CD8-positive, alpha-beta memory T cell (primary cell): ENCODE measurements at regions of chr1 and their contacts with region 1.

Region 1: DNA sequence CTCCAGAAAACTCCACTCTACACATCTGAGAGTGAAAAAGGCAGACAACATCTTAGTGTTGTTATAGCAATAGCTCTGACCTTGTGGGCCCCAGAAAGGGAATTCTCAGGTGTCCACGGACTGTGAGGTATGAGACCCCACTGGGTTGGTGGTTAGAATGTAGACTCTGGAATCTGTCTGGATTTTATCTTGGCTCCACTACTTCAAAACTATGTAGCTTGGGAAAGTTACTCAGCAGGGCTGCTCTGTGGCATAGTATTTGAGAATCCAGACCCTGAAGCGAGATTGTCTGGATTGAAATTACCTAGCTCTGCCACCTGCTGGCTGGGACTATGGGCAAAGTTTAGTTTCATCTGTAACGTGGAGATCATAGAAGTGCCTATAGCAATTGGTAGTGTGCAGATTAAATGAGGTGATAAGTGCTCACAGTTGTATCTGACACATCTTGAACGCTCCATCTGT is 25.8 kb downstream of the PRDM2 start:
- DNase-seq: peak; percentile 25 to 71 (median 50)
- H3K4me3 ChIP-seq: no peak overlapping the region
- H3K4me3 Mint-ChIP-seq: peak overlapping the region in 1 of 7 donors; percentile 6
- H3K27ac ChIP-seq: no peak overlapping the region
- H3K27ac Mint-ChIP-seq: peak overlapping the region; percentile 12 to 92 (median 73)
- H3K4me1 ChIP-seq: peaks cover 28% of the 10 kb centered on the region
- H3K4me1 Mint-ChIP-seq: peaks cover 49 to 77% (median 63%) of the 10 kb centered on the region in 3 donors
- H3K27me3 ChIP-seq: no peaks in the 10 kb centered on the region
- H3K27me3 Mint-ChIP-seq: no peaks in the 10 kb centered on the region

Region 2: DNA sequence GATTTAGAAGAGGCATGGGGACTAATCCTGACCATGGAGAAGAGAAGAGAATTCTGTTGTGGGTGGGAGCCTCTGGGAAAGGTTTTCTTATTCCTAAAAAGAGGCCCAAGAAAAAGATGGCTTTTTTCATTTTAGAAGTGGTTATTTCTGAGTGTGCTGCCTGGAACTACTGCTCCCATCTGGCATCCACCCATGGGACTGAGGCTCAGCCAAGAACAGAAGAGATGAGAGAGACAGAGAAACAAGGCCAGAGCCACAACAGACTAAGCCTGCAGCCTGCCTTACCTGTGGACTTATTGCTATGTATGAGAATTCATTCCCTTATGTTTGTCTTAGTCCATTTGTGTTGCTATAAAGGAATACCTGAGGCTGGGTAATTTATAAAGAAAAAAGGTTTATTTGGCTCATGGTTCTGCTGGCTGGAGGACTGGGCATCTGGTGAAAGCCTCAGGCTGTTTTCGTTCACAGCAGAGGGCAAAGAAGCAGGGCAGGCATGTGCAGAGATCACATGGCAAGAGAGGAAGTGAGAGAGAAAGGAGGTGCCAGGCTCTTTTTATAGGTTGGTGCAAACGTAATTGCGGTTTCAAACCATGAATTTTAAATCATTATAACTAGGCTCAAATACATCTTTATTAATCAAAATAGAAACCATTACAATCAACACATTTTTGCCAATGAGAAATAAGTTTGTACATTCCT is 83.3 kb before region 1 on chr1:
- CTCF ChIA-PET with region 1: no interaction called
- POLR2A ChIA-PET with region 1: no interaction called
- DNase-seq: no peak
- H3K4me3 ChIP-seq: no peak overlapping the region
- H3K4me3 Mint-ChIP-seq: no peak overlapping the region
- H3K27ac ChIP-seq: no peak overlapping the region
- H3K27ac Mint-ChIP-seq: no peak overlapping the region
- H3K4me1 ChIP-seq: no peaks in the 10 kb centered on the region
- H3K4me1 Mint-ChIP-seq: no peaks in the 10 kb centered on the region
- H3K27me3 ChIP-seq: no peaks in the 10 kb centered on the region
- H3K27me3 Mint-ChIP-seq: peaks cover 8 to 10% of the 10 kb centered on the region in 2 donors

Region 3: GRCh38 chr1:13664451-13664850 is 61.3 kb before region 1 on chr1:
- CTCF ChIA-PET with region 1: interaction called, 24 read pairs
- POLR2A ChIA-PET with region 1: no interaction called
- DNase-seq: no peak
- H3K4me3 ChIP-seq: no peak overlapping the region
- H3K4me3 Mint-ChIP-seq: no peak overlapping the region
- H3K27ac ChIP-seq: no peak overlapping the region
- H3K27ac Mint-ChIP-seq: no peak overlapping the region
- H3K4me1 ChIP-seq: peaks cover 7% of the 10 kb centered on the region
- H3K4me1 Mint-ChIP-seq: peaks cover 6 to 7% (median 6%) of the 10 kb centered on the region in 3 donors
- H3K27me3 ChIP-seq: no peaks in the 10 kb centered on the region
- H3K27me3 Mint-ChIP-seq: peaks cover 9 to 19% of the 10 kb centered on the region in 2 donors

Region 4: GRCh38 chr1:13714851-13715250 is 10.9 kb before region 1 on chr1:
- CTCF ChIA-PET with region 1: interaction called, 11 read pairs
- POLR2A ChIA-PET with region 1: interaction called, 4 read pairs
- DNase-seq: no peak
- H3K4me3 ChIP-seq: no peak overlapping the region
- H3K4me3 Mint-ChIP-seq: no peak overlapping the region
- H3K27ac ChIP-seq: no peak overlapping the region
- H3K27ac Mint-ChIP-seq: peak overlapping the region in 1 of 8 donors; percentile 46
- H3K4me1 ChIP-seq: no peaks in the 10 kb centered on the region
- H3K4me1 Mint-ChIP-seq: peaks cover 38 to 71% (median 59%) of the 10 kb centered on the region in 3 donors
- H3K27me3 ChIP-seq: no peaks in the 10 kb centered on the region
- H3K27me3 Mint-ChIP-seq: peaks cover 0 to 3% of the 10 kb centered on the region in 2 donors

Region 5: GRCh38 chr1:13764588-13765332 is 39.0 kb after region 1 on chr1:
- CTCF ChIA-PET with region 1: no interaction called
- POLR2A ChIA-PET with region 1: no interaction called
- DNase-seq: peak in 2 of 5 donors; percentile 15 to 50
- H3K4me3 ChIP-seq: no peak overlapping the region
- H3K4me3 Mint-ChIP-seq: peak overlapping the region in 4 of 7 donors; percentile 1 to 57 (median 24)
- H3K27ac ChIP-seq: no peak overlapping the region
- H3K27ac Mint-ChIP-seq: peak overlapping the region; percentile 11 to 85 (median 48)
- H3K4me1 ChIP-seq: peaks cover 63% of the 10 kb centered on the region
- H3K4me1 Mint-ChIP-seq: peaks cover 84 to 91% (median 87%) of the 10 kb centered on the region in 3 donors
- H3K27me3 ChIP-seq: no peaks in the 10 kb centered on the region
- H3K27me3 Mint-ChIP-seq: no peaks in the 10 kb centered on the region

Region 6: DNA sequence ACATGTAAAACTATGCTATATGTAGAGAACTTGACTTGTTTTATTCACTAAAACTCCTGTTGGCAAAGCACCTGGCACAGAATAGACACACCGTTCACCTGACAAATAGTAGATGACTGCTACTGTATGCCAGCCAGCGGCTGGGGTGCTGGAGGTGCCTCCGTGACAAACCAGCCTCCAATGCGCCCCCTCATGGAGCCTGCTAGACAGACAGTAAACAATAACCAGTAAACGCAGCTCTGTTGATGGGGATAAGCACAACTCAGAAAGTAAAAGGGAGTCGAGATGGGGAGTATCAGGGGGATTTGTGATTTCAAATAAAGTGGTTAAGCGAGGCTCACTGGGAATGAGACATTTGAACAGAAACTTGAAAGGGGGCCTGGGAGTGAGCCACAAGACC is 81.5 kb after region 1 on chr1:
- CTCF ChIA-PET with region 1: no interaction called
- POLR2A ChIA-PET with region 1: no interaction called
- DNase-seq: no peak
- H3K4me3 ChIP-seq: no peak overlapping the region
- H3K4me3 Mint-ChIP-seq: no peak overlapping the region
- H3K27ac ChIP-seq: no peak overlapping the region
- H3K27ac Mint-ChIP-seq: peak overlapping the region in 4 of 8 donors; percentile 24 to 79 (median 58)
- H3K4me1 ChIP-seq: no peaks in the 10 kb centered on the region
- H3K4me1 Mint-ChIP-seq: peaks cover 44 to 62% (median 45%) of the 10 kb centered on the region in 3 donors
- H3K27me3 ChIP-seq: no peaks in the 10 kb centered on the region
- H3K27me3 Mint-ChIP-seq: peaks cover 0 to 2% of the 10 kb centered on the region in 2 donors

Region 7: DNA sequence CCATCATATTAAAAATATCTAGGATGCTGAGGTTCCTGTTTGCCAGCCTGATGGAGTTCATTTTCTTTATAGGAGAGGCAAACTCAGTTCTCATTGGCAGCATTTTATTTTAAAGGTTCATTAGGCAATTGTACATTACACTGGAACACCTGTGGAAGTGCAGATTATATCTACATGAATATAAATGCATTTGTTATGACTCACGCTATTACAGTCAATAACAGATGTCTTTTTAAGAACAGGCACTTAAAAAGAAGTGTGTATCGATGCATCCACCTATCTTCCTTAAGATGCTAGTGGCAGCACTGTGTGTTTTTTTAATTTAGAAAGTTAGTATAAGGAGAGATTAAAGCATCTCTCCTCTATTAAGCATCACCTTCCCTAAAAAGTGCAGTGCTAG is 250.7 kb after region 1 on chr1:
- CTCF ChIA-PET with region 1: no interaction called
- POLR2A ChIA-PET with region 1: no interaction called
- DNase-seq: no peak
- H3K4me3 ChIP-seq: no peak overlapping the region
- H3K4me3 Mint-ChIP-seq: no peak overlapping the region
- H3K27ac ChIP-seq: no peak overlapping the region
- H3K27ac Mint-ChIP-seq: no peak overlapping the region
- H3K4me1 ChIP-seq: no peaks in the 10 kb centered on the region
- H3K4me1 Mint-ChIP-seq: no peaks in the 10 kb centered on the region
- H3K27me3 ChIP-seq: no peaks in the 10 kb centered on the region
- H3K27me3 Mint-ChIP-seq: peaks cover 5 to 15% of the 10 kb centered on the region in 2 donors